Dendritic cell treated with granulocyte-macrophage colony-stimulating factor and Interleukin-4, amounts not matched to agents 40 ng/mL and 50 ng/mL, for 4 days (primary cell): ENCODE measurements at regions of chr10 and their contacts with region 1.

Region 1: DNA sequence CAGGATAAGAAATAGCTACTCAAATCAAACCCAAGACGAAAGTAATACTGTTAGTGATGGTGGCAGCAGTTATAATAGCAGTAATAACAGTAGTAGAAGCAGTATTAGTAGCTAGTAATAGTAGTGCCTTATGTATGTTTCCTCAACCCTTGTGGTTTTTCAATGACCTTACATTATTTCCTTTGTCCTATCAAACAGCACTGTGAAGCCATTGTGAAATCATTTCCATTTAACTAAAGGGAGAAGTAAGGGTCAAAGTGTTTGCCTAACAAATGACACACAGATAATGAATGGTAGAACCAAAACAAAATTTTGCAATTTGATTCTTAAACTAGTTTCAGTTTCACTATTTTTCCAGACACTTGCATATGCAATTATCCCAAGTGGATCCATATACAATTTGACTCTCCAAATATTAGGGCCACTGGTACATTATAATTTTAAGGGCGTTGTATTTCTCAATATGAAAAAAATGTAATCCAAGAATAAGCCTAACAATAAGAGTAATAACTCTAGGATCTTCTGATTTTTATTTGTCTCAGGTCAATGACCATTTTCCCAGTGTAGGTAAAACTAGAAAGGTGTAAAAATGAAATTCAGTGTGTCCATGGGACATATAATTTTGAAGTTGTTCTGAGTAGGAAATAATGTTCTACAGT is 33.7 kb upstream of the TMEM26 start:
- H3K4me3 Mint-ChIP-seq: no peak overlapping the region
- H3K27ac Mint-ChIP-seq: no peak overlapping the region
- H3K4me1 Mint-ChIP-seq: peaks cover 25% of the 10 kb centered on the region
- H3K27me3 Mint-ChIP-seq: peaks cover 20% of the 10 kb centered on the region

Region 2: DNA sequence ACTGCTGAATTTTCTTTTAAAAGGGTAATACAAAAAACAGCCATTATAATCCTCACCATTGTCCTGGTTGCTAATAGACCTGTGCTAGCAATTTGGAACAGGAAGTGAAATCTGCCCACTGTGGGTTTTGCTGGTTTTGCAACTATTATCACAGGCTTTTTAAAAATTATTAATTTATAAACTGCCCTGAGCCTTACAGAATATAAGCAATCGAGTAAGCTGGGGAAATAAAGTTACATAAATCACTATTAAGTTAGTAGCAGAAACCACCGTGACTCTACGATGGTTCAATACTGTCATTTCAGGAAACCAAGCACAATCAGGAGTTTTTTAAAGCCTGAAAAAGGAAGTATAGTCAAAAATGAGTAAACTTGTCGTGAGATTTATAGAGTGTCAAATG is 96.0 kb before region 1 on chr10:
- intact Hi-C with region 1: loop called (anchors 2 kb)
- H3K4me3 Mint-ChIP-seq: peak overlapping the region; percentile 2
- H3K27ac Mint-ChIP-seq: peak overlapping the region; percentile 96
- H3K4me1 Mint-ChIP-seq: peaks cover 53% of the 10 kb centered on the region
- H3K27me3 Mint-ChIP-seq: no peaks in the 10 kb centered on the region

Region 3: GRCh38 chr10:61541960-61542359 is 55.1 kb after region 1 on chr10:
- intact Hi-C with region 1: no loop called
- H3K4me3 Mint-ChIP-seq: no peak overlapping the region
- H3K27ac Mint-ChIP-seq: no peak overlapping the region
- H3K4me1 Mint-ChIP-seq: no peaks in the 10 kb centered on the region
- H3K27me3 Mint-ChIP-seq: no peaks in the 10 kb centered on the region